ENCODE measurements at regions of chr13 and their contacts with region 1.

Region 1: GRCh38 chr13:56144060-56144459 is 996.7 kb upstream of the PRR20A start:
- DNase-seq: no peak
- ATAC-seq: no peak
- H3K4me3 ChIP-seq: no peak overlapping the region
- H3K4me3 Mint-ChIP-seq: no peak overlapping the region
- H3K27ac ChIP-seq: no peak overlapping the region
- H3K27ac Mint-ChIP-seq: no peak overlapping the region
- H3K4me1 ChIP-seq: no peaks in the 10 kb centered on the region
- H3K4me1 Mint-ChIP-seq: no peaks in the 10 kb centered on the region
- H3K27me3 ChIP-seq: no peaks in the 10 kb centered on the region
- H3K27me3 Mint-ChIP-seq: no peaks in the 10 kb centered on the region
- CTCF ChIP-seq: no peak

Region 2: DNA sequence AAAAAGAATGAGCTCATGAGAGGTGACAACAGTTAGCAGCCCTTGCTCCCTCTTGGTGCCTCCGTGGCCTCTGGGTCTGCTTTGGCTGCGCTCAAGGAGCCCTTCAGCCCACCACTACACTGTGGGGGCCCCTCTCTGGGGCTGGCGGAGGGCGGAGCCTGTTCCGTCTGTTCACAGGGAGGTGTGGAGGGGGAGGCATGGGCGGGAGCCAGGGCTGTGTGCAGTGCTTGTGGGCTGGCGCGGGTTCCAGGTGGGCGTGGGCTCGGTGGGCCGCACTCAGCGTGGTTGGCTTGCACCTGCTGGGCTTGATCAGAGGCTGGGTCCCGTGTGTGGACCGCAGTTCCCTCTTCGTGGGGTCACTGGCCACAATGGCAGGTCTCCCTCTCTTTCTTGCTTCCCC is 43.3 kb after region 1 on chr13:
- intact Hi-C with region 1: no loop called
- DNase-seq: no peak
- ATAC-seq: no peak
- H3K4me3 ChIP-seq: no peak overlapping the region
- H3K4me3 Mint-ChIP-seq: no peak overlapping the region
- H3K27ac ChIP-seq: no peak overlapping the region
- H3K27ac Mint-ChIP-seq: no peak overlapping the region
- H3K4me1 ChIP-seq: no peaks in the 10 kb centered on the region
- H3K4me1 Mint-ChIP-seq: no peaks in the 10 kb centered on the region
- H3K27me3 ChIP-seq: no peaks in the 10 kb centered on the region
- H3K27me3 Mint-ChIP-seq: no peaks in the 10 kb centered on the region
- CTCF ChIP-seq: no peak

Region 3: GRCh38 chr13:56201834-56202233 is 57.8 kb after region 1 on chr13:
- intact Hi-C with region 1: loop called (anchors 10 kb)
- DNase-seq: no peak
- ATAC-seq: no peak
- H3K4me3 ChIP-seq: no peak overlapping the region
- H3K4me3 Mint-ChIP-seq: no peak overlapping the region
- H3K27ac ChIP-seq: no peak overlapping the region
- H3K27ac Mint-ChIP-seq: no peak overlapping the region
- H3K4me1 ChIP-seq: no peaks in the 10 kb centered on the region
- H3K4me1 Mint-ChIP-seq: no peaks in the 10 kb centered on the region
- H3K27me3 ChIP-seq: no peaks in the 10 kb centered on the region
- H3K27me3 Mint-ChIP-seq: no peaks in the 10 kb centered on the region
- CTCF ChIP-seq: no peak

Region 4: GRCh38 chr13:57865600-57866294 is 1721.7 kb after region 1 on chr13:
- intact Hi-C with region 1: no loop called
- DNase-seq: no peak
- ATAC-seq: no peak
- H3K4me3 ChIP-seq: no peak overlapping the region
- H3K4me3 Mint-ChIP-seq: no peak overlapping the region
- H3K27ac ChIP-seq: no peak overlapping the region
- H3K27ac Mint-ChIP-seq: no peak overlapping the region
- H3K4me1 ChIP-seq: no peaks in the 10 kb centered on the region
- H3K4me1 Mint-ChIP-seq: no peaks in the 10 kb centered on the region
- H3K27me3 ChIP-seq: no peaks in the 10 kb centered on the region
- H3K27me3 Mint-ChIP-seq: no peaks in the 10 kb centered on the region
- CTCF ChIP-seq: no peak